Left cardiac atrium (tissue), 4 donors: ENCODE measurements at regions of chr5 and their contacts with region 1.

Region 1: DNA sequence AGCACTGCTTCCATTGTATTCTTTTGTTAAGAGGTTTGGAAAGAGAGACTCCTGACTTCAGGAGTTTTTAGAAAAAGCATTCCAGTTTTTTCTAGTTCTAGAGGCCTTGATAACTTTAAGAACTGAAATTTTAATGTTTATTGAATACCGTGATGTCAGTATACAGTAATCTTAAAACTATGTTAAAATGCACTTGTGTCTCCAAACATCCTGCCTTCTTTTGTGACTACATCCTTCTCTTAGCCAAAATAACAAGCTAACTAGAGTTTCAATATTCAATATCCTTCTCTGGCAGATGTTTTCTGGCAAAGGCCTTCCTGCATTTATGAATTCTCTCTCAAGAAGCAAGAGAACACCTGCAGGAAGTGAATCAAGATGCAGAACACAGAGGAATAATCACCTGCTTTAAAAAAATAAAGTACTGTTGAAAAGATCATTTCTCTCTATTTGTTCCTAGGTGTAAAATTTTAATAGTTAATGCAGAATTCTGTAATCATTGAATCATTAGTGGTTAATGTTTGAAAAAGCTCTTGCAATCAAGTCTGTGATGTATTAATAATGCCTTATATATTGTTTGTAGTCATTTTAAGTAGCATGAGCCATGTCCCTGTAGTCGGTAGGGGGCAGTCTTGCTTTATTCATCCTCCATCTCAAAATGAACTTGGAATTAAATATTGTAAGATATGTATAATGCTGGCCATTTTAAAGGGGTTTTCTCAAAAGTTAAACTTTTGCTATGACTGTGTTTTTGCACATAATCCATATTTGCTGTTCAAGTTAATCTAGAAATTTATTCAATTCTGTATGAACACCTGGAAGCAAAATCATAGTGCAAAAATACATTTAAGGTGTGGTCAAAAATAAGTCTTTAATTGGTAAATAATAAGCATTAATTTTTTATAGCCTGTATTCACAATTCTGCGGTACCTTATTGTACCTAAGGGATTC is 43.1 kb downstream of the NDFIP1 start:
- DNase-seq: peak; percentile 44
- ATAC-seq: peak; percentile 60 to 61

Region 2: GRCh38 chr5:142316051-142316450 is 164.3 kb after region 1 on chr5:
- intact Hi-C with region 1: loop called in 1 of 2 experiments (anchors 5 kb)
- DNase-seq: no peak
- ATAC-seq: peak; percentile 19 to 47

Region 3: GRCh38 chr5:142597546-142598341 is 446.0 kb after region 1 on chr5:
- intact Hi-C with region 1: no loop called
- DNase-seq: peak; percentile 31
- ATAC-seq: peak in 1 of 2 donors; percentile 27